MCF 10A (cell line): ENCODE measurements at regions of chr1 and their contacts with region 1.

Region 1: DNA sequence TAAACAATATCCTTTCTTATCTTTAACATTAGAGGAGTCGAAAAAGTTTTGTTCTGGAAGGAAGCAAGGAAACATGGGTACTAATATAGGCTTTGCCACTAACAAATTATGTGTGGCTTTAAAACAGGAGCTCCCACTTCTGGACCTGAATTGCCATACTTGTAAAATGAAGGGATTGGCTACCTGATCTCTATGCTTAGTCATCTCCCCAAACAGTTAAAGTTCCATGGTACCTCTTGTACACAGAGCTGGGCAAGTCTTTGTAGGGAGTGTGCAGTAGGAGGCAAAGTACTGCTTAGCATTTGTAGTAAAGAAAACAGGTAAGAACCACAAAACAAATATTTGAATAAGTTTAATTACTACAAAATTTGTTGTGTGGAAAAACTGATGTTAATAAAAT is 81.3 kb downstream of the MAST2 start:
- DNase-seq: peak; percentile 22
- H3K4me3 Mint-ChIP-seq: no peak overlapping the region
- H3K27ac Mint-ChIP-seq: peak overlapping the region; percentile 12
- H3K4me1 Mint-ChIP-seq: peaks cover 17% of the 10 kb centered on the region
- H3K27me3 Mint-ChIP-seq: no peaks in the 10 kb centered on the region
- CTCF ChIP-seq: no peak

Region 2: GRCh38 chr1:45512641-45513054 is 372.1 kb before region 1 on chr1:
- CTCF ChIA-PET with region 1: no interaction called
- POLR2A ChIA-PET with region 1: no interaction called
- intact Hi-C with region 1: loop called (anchors 1 kb)
- DNase-seq: peak; percentile 82
- H3K4me3 Mint-ChIP-seq: no peak overlapping the region
- H3K27ac Mint-ChIP-seq: no peak overlapping the region
- H3K4me1 Mint-ChIP-seq: no peaks in the 10 kb centered on the region
- H3K27me3 Mint-ChIP-seq: no peaks in the 10 kb centered on the region
- CTCF ChIP-seq: peak; percentile 67

Region 3: GRCh38 chr1:45583264-45583665 is 301.4 kb before region 1 on chr1:
- CTCF ChIA-PET with region 1: interaction called, 4 read pairs
- POLR2A ChIA-PET with region 1: interaction called, 3 read pairs
- intact Hi-C with region 1: loop called (anchors 1 kb)
- DNase-seq: peak; percentile 97
- H3K4me3 Mint-ChIP-seq: peak overlapping the region; percentile 89
- H3K27ac Mint-ChIP-seq: peak overlapping the region; percentile 68
- H3K4me1 Mint-ChIP-seq: peaks cover 15% of the 10 kb centered on the region
- H3K27me3 Mint-ChIP-seq: no peaks in the 10 kb centered on the region
- CTCF ChIP-seq: no peak

Region 4: DNA sequence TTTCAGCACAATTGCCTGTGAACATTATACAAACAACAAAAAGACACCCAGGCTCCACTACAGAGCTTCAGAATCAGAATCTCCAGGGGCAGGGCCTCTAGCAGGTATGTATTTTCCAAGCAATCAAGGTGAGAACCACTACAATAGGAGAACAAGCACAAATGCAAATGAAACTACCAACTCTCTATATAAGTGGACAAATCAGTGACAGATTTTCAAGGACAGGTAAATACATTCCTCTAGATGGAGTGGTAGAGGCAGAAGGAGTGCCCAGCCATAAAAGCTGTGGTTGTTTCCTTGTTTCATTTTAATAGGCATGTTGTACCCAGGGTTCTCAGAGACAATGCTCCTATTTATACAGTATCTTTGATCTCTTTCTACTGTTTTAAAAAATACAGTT is 240.7 kb before region 1 on chr1:
- CTCF ChIA-PET with region 1: no interaction called
- POLR2A ChIA-PET with region 1: interaction called, 3 read pairs
- intact Hi-C with region 1: loop called (anchors 5 kb)
- DNase-seq: no peak
- H3K4me3 Mint-ChIP-seq: no peak overlapping the region
- H3K27ac Mint-ChIP-seq: no peak overlapping the region
- H3K4me1 Mint-ChIP-seq: peaks cover 3% of the 10 kb centered on the region
- H3K27me3 Mint-ChIP-seq: no peaks in the 10 kb centered on the region
- CTCF ChIP-seq: no peak

Region 5: GRCh38 chr1:45750298-45751038 is 134.2 kb before region 1 on chr1 and contains the start of gene IPP:
- CTCF ChIA-PET with region 1: interaction called, 4 read pairs
- POLR2A ChIA-PET with region 1: no interaction called
- intact Hi-C with region 1: loop called (anchors 5 kb)
- DNase-seq: peak; percentile 97
- H3K4me3 Mint-ChIP-seq: peak within 1 kb of the TSS; percentile 97
- H3K27ac Mint-ChIP-seq: peak within 1 kb of the TSS; percentile 100
- H3K4me1 Mint-ChIP-seq: peaks cover 4% of the 10 kb centered on the region
- H3K27me3 Mint-ChIP-seq: no peaks in the 10 kb centered on the region
- CTCF ChIP-seq: no peak
- total RNA-seq, gene IPP: 11.6 and 17.6 TPM in 2 replicates